ENCODE measurements at regions of chr17 and their contacts with region 1.

Region 1: GRCh38 chr17:7351665-7352501 is at the start of gene KCTD11:
- DNase-seq: peak; percentile 95
- CTCF ChIP-seq: peak; percentile 57

Region 2: GRCh38 chr17:7329374-7329996 is 22.4 kb before region 1 on chr17:
- CTCF ChIA-PET with region 1: interaction called, 62 read pairs
- POLR2A ChIA-PET with region 1: interaction called, 4 read pairs
- DNase-seq: peak; percentile 95
- CTCF ChIP-seq: no peak

Region 3: GRCh38 chr17:7363311-7363710 is 11.4 kb after region 1 on chr17:
- CTCF ChIA-PET with region 1: interaction called, 24 read pairs
- POLR2A ChIA-PET with region 1: no interaction called
- DNase-seq: no peak
- CTCF ChIP-seq: no peak

Region 4: GRCh38 chr17:7403977-7404736 is 52.3 kb after region 1 on chr17 and contains the start of gene TMEM256:
- CTCF ChIA-PET with region 1: interaction called, 10 read pairs
- POLR2A ChIA-PET with region 1: interaction called, 15 read pairs
- DNase-seq: peak; percentile 97
- CTCF ChIP-seq: no peak

Region 5: GRCh38 chr17:7515911-7516610 is 164.2 kb after region 1 on chr17:
- CTCF ChIA-PET with region 1: interaction called, 19 read pairs
- POLR2A ChIA-PET with region 1: no interaction called
- DNase-seq: no peak
- CTCF ChIP-seq: no peak

Measured in GM10248 (cell line).